Activated CD8-positive, alpha-beta T cell treated with anti-CD3 and anti-CD28 coated beads for 36 hours (primary cell): ENCODE measurements at regions of chr11 and their contacts with region 1.

Region 1: GRCh38 chr11:103601225-103601846 is 435.1 kb upstream of the DDI1 start:
- DNase-seq: peak; percentile 45
- ATAC-seq: peak; percentile 69
- H3K4me3 Mint-ChIP-seq: no peak overlapping the region
- H3K27ac Mint-ChIP-seq: no peak overlapping the region
- H3K4me1 Mint-ChIP-seq: no peaks in the 10 kb centered on the region
- H3K27me3 Mint-ChIP-seq: peaks cover 4% of the 10 kb centered on the region
- CTCF ChIP-seq: peak; percentile 81

Region 2: GRCh38 chr11:103202048-103202651 is 399.2 kb before region 1 on chr11:
- CTCF ChIA-PET with region 1: no interaction called
- POLR2A ChIA-PET with region 1: no interaction called
- intact Hi-C with region 1: loop called (anchors 5 kb)
- DNase-seq: no peak
- ATAC-seq: no peak
- H3K4me3 Mint-ChIP-seq: no peak overlapping the region
- H3K27ac Mint-ChIP-seq: no peak overlapping the region
- H3K4me1 Mint-ChIP-seq: no peaks in the 10 kb centered on the region
- H3K27me3 Mint-ChIP-seq: no peaks in the 10 kb centered on the region
- CTCF ChIP-seq: peak; percentile 53

Region 3: GRCh38 chr11:103326070-103326794 is 275.1 kb before region 1 on chr11:
- CTCF ChIA-PET with region 1: interaction called, 7 read pairs
- POLR2A ChIA-PET with region 1: no interaction called
- intact Hi-C with region 1: loop called (anchors 1 kb)
- DNase-seq: peak; percentile 30
- ATAC-seq: peak; percentile 96
- H3K4me3 Mint-ChIP-seq: no peak overlapping the region
- H3K27ac Mint-ChIP-seq: no peak overlapping the region
- H3K4me1 Mint-ChIP-seq: peaks cover 8% of the 10 kb centered on the region
- H3K27me3 Mint-ChIP-seq: no peaks in the 10 kb centered on the region
- CTCF ChIP-seq: peak; percentile 63